Common myeloid progenitor, CD34-positive (primary cell): ENCODE measurements at regions of chr5 and their contacts with region 1.

Region 1: DNA sequence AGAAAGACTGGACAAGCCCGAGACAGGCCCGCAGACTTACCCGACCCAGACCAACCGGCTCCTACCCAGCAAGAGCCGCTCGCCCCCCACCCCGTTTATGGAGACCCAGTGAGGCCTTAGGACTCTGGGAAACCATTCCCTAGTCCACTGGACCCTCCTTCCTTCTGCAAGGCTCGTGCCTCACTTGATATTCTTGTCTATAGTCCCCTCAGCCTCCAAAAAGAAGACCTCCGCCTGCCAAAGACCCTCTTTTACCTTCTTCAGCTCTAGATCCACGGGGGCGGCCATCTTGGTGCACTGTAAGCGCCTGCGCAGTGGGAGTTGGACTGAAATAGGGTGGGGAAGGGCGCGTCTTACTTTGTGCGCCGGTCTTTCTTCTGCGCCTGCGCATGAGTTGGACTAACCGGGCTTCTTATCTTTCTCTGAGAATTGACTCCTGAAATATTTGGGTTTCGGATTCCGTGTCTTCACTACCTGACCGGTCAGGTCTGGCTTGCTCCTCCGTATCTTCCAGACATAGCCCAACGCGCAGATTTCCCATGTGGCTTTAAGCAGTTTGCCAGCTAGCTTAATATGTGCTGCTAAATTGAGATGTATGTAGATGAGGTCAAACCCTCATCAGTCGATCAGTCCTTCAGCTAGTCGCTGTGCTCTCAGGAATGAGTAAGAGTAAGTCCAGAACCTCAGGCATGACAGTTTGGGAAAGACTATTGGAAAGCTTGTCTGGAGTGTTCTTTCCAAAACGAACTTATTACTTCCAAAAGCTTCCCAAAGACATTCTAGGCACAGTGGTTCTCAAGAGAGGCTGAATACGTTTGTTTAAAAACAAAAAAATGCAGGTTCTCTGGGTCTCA is at the start of gene PFDN1:
- DNase-seq: peak; percentile 93 to 96 (median 95)
- H3K4me3 ChIP-seq: peak within 1 kb of the TSS; percentile 82 to 99 (median 97)
- H3K27ac ChIP-seq: peak within 1 kb of the TSS; percentile 90 to 97
- H3K4me1 ChIP-seq: peaks cover 5 to 18% (median 14%) of the 10 kb centered on the region in 4 experiments
- H3K27me3 ChIP-seq: no peaks in the 10 kb centered on the region

Region 2: DNA sequence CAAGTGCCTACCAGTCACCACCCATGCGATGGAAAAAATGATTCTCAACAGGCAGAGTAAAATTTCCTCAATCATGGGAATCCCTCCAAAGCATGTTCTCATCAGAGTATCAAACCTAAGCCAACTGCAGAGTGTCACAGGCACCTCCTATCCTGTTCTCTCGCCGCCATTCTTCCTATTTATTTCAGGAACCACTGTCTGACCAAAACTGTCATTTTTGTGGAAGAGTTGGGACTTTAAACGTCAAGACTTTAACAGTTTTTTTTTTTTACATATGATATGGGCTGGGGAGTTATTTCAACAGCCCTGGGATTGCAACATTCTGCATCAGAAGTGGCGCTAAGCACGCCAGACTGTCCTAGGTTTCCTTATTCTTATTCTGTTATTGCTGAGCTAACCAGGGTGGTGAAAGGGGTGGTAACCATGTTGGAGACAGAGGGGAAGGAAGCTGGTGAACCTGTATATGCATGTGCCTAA is 29.6 kb before region 1 on chr5:
- CTCF ChIA-PET with region 1: no interaction called
- POLR2A ChIA-PET with region 1: no interaction called
- DNase-seq: peak; percentile 27 to 70 (median 68)
- H3K4me3 ChIP-seq: peak overlapping the region in 2 of 7 experiments; percentile 28 to 33
- H3K27ac ChIP-seq: no peak overlapping the region
- H3K4me1 ChIP-seq: peaks cover 4 to 27% (median 7%) of the 10 kb centered on the region in 4 experiments
- H3K27me3 ChIP-seq: no peaks in the 10 kb centered on the region

Region 3: DNA sequence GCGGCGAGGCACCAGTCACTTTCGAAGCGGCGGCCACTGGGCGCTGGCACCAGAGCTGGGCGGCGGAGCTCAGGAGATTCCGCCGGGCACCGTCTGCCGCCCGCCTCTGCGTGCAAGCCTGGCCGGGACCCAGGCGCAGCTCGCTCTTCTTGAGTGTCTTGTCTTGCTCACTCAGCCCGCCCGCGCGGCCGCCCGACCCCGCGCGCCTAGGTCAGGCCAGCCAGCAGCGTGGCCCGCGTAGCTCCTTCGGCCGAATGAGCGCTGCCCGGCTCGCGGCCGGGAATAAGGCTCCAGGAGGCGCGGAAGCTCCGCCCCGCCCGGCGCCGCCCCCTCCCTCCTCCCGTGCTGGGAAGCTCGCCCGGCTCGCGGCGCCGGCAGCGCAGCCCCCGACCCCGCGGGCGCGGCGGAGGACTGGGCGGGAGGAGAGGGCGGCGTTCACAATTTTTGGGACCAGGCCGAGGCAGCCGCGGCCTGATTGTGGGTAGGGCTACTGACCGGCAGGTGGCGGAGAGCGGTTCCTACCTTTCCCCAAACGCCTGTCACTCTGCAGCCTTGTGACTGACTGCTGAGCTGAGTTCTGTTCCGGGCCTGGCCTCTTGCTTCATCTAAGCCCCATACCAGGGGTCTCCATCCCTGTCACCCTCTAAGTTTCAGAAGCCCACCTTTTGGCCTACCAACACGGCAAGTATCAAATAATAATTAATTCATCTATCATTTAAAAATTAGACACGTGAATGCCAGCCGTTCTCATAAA is 43.5 kb after region 1 on chr5 and contains the start of gene HBEGF:
- CTCF ChIA-PET with region 1: interaction called, 14 read pairs
- POLR2A ChIA-PET with region 1: no interaction called
- DNase-seq: peak; percentile 50 to 59 (median 52)
- H3K4me3 ChIP-seq: peak within 1 kb of the TSS; percentile 44 to 80 (median 66)
- H3K27ac ChIP-seq: no peak within 1 kb of the TSS
- H3K4me1 ChIP-seq: peaks cover 21 to 61% (median 36%) of the 10 kb centered on the region in 4 experiments
- H3K27me3 ChIP-seq: peaks cover 0 to 13% (median 6%) of the 10 kb centered on the region in 5 experiments

Region 4: DNA sequence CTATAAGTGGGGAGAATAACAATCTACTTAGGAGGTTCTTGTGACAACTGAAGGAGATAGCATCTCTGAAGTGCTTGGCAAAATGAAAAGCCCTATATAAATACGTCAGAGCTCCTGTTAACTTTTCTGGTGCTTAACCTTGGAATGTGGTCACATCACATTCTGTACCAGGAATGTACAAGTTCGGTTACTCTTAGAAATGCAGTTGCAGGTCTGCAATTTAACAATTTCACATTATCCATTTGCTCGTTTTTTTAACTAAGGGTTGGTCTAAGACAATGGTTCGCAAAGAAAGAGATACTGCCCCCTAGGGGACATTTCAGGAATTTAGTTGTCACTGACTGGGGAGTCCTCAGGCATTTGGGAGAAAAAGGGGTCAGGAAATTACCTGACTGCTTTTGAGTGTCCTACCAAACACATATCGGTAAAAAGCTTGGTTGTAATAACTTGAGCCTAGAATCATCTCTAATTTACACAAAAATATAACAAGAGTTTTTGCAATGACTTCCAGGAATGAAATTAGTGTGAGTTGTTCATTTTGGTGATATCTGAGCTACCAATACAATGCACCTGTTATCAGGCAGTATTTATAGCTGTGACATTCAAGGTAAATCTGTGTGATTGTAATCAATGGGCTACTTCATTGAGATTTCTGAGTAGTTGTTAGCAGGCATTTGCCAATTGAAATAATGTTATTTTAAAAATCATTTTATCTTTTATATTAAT is 48.8 kb after region 1 on chr5:
- CTCF ChIA-PET with region 1: interaction called, 11 read pairs
- POLR2A ChIA-PET with region 1: no interaction called
- DNase-seq: peak; percentile 70 to 85 (median 76)
- H3K4me3 ChIP-seq: no peak overlapping the region
- H3K27ac ChIP-seq: no peak overlapping the region
- H3K4me1 ChIP-seq: peaks cover 2 to 14% (median 11%) of the 10 kb centered on the region in 4 experiments
- H3K27me3 ChIP-seq: no peaks in the 10 kb centered on the region